Ascending aorta (tissue), 2 donors: ENCODE measurements at regions of chr13 and their contacts with region 1.

Region 1: DNA sequence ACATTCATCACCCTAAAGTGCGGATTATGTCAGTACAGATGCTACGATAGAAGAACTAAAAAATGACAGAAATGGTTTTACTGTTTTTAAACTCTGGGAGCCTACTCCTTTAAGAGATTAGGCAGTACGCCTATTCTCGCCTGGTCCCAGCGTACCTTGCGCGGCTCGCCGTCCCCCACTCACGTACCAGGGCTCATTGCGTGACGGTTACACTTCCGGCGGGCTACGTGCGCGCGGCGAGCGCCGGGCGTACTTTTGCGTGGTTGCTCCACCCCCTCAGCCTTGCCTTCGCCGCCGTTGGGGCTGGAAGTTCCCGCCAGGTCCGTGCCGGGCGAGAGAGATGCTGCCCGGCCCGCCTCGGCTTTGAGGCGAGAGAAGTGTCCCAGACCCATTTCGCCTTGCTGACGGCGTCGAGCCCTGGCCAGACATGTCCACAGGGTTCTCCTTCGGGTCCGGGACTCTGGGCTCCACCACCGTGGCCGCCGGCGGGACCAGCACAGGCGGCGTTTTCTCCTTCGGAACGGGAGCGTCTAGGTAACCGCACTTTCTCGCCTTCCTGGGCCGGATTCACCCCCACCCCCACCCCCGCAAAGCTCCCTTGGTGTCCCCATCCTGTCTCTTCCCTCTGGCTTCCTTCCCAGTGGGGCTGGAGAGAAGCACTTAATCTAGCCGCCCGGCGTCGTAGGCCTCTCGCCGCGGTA is at the start of gene NUP58:
- DNase-seq: peak; percentile 84 to 97
- H3K4me3 ChIP-seq: peak within 1 kb of the TSS; percentile 94
- H3K27ac ChIP-seq: peak within 1 kb of the TSS; percentile 91 to 96
- H3K4me1 ChIP-seq: peaks cover 0 to 11% of the 10 kb centered on the region in 2 donors
- H3K27me3 ChIP-seq: no peaks in the 10 kb centered on the region
- CTCF ChIP-seq: no peak
- total RNA-seq, gene NUP58: 9.7 TPM

Region 2: DNA sequence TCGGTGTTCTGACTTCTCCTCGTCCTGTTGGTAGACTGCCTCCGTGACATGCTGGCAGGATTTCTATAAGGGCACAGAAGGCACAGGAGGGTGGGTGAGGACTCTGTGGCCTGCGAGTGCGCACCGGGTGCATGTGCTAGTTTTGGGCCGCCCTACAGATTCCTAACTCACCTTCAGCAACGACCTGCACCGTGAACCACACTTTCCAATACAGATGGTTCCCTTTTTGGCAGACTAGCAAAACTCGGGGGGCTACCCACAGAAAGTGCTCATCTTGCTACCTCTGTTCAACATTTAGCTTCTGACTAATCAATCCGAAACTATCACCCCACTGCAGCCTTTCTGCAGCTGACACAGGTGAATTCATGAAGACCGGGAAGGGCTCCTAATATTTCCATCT is 115.3 kb before region 1 on chr13:
- intact Hi-C with region 1: no loop called
- DNase-seq: peak in 1 of 2 donors; percentile 34
- H3K4me3 ChIP-seq: no peak overlapping the region
- H3K27ac ChIP-seq: no peak overlapping the region
- H3K4me1 ChIP-seq: no peaks in the 10 kb centered on the region
- H3K27me3 ChIP-seq: no peaks in the 10 kb centered on the region
- CTCF ChIP-seq: no peak

Region 3: GRCh38 chr13:25286969-25287961 is 14.2 kb before region 1 on chr13 and contains the start of gene MTMR6:
- intact Hi-C with region 1: loop called (anchors 1 kb)
- DNase-seq: peak; percentile 60 to 96
- H3K4me3 ChIP-seq: peak within 1 kb of the TSS; percentile 72 to 89
- H3K27ac ChIP-seq: peak within 1 kb of the TSS; percentile 84 to 94
- H3K4me1 ChIP-seq: peaks cover 3 to 22% of the 10 kb centered on the region in 2 donors
- H3K27me3 ChIP-seq: no peaks in the 10 kb centered on the region
- CTCF ChIP-seq: peak; percentile 98 to 100 (median 100)
- total RNA-seq, gene MTMR6: 6.4 TPM